IMR-90 (cell line): ENCODE measurements at regions of chr2 and their contacts with region 1.

Region 1: DNA sequence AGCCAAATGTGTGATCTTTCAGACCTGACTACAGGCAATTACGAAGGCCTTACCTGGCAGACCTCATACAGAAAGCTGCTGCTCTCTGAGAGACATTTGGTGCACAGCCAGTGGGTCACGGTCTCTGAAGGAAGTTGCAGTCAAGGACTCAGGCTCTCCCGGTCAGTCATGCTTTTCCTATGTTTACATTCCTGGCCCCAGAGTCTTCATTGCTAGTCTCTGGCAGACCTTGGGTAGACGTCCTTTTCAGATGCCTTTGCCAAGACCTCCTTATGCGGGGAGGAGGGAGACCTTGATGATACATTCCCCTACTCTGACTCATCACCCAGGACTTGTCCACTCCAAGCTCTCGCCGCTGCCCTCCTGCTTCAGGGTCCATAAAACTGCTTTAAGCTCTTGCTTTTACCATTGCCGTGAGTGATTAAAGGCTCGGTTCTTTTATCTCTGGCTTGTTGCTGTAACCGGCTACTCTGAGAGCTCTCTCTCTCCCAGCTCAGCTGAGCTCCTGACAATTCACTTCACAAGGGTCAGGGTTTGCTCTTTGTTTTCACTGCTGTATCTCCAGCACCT is 62.0 kb upstream of the SLC35F5 start:
- DNase-seq: peak; percentile 100
- ATAC-seq: peak; percentile 98
- H3K4me3 ChIP-seq: peak overlapping the region; percentile 1; the same call in 1 of the 2 replicates
- H3K27ac ChIP-seq: peak overlapping the region; percentile 72
- H3K4me1 ChIP-seq: peaks cover 9% of the 10 kb centered on the region
- H3K27me3 ChIP-seq: no peaks in the 10 kb centered on the region
- CTCF ChIP-seq: no peak
- POLR2A ChIP-seq: no peak
- RAD21 ChIP-seq: peak; percentile 44; the same call in 1 of the 2 replicates

Region 2: DNA sequence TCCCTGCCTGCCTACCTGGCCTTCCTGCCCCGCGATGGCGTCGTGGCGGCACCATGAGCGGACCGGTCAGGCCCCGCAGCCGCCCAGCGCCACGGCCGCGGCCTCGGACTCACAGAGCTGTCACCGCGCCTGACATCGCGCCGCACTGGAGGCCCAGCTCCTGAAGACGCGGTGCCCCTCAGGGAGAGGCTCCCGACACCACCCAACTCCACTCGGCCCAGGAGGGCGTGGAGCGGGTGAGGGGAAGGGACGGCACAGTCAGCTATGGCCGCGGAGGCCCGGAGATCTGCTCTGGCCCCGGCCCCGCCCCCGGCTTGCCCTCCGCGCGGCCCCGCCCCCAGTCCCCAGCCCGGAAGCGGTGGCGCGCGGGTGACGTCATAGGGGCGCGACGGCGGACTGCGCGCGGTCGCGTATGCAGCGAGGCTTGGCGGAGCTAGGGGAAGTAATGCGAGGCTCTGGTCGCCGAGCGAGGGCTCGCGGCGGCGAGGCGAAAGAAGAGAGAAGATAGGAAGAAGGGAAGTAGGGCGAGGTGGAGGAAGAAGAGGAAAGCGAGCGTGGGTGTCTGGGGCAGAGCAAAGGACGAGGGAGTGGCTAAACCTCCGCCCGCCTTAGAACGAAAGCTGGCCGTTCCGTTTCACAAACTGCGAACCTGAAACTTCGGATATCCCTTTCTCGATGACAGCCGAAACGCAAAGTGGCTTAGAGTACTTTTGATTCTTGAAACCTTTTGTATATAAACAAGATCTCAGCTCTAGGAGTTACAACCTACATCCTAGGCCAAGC is 61.9 kb before region 1 on chr2 and contains the start of gene SLC35F5:
- CTCF ChIA-PET with region 1: no interaction called
- POLR2A ChIA-PET with region 1: interaction called, 3 read pairs
- dilution Hi-C with region 1: no loop called
- in situ Hi-C with region 1: no loop called
- intact Hi-C with region 1: loop called (anchors 1 kb)
- DNase-seq: peak; percentile 86
- ATAC-seq: peak; percentile 98
- H3K4me3 ChIP-seq: peak within 1 kb of the TSS; percentile 87
- H3K27ac ChIP-seq: peak within 1 kb of the TSS; percentile 99
- H3K4me1 ChIP-seq: 0 out of 2 replicates have a peak, but pooled peaks cover 2% of the 10 kb centered on the region
- H3K27me3 ChIP-seq: no peaks in the 10 kb centered on the region
- CTCF ChIP-seq: no peak
- POLR2A ChIP-seq: peak; percentile 89
- RAD21 ChIP-seq: no peak
- total RNA-seq, gene SLC35F5: 93.4 and 106 TPM in 2 replicates

Region 3: DNA sequence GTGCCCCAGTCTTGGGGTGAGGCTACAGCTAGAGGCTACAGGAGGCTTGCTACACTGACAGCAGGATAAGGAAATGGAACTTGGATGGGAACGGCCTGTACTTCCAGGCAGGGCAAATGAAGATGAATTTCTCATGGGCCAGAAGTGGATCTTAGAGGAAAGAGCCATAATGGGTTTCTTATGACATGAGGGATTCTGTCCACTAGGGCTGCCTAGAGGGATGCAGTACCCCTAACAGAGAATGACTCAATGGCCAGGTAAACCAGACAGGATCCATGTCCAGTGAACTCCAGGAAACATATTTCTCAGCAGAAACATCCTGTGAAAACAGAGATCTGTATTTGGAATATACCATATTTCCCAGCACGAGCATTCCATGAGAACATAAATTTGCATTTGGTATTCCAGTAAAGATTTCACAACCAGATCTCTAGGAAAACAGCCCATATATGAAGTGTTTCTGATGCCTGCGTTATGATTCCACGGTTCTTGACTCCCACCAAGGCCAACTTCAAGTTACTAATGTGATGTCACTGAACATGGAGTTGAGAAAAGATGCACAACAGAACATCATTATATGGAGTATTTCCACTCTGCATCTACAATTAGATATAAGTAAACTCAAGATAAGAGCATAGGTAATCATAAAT is 50.5 kb before region 1 on chr2:
- CTCF ChIA-PET with region 1: no interaction called
- POLR2A ChIA-PET with region 1: no interaction called
- dilution Hi-C with region 1: no loop called
- in situ Hi-C with region 1: no loop called
- intact Hi-C with region 1: no loop called
- DNase-seq: peak; percentile 12
- ATAC-seq: no peak; the same call in 1 of the 2 replicates
- H3K4me3 ChIP-seq: no peak overlapping the region
- H3K27ac ChIP-seq: peak overlapping the region; percentile 9; the same call in 1 of the 2 replicates
- H3K4me1 ChIP-seq: peaks cover 5% of the 10 kb centered on the region
- H3K27me3 ChIP-seq: no peaks in the 10 kb centered on the region
- CTCF ChIP-seq: no peak
- POLR2A ChIP-seq: no peak
- RAD21 ChIP-seq: no peak

Region 4: GRCh38 chr2:115624332-115624731 is 1805.9 kb after region 1 on chr2:
- CTCF ChIA-PET with region 1: no interaction called
- POLR2A ChIA-PET with region 1: no interaction called
- dilution Hi-C with region 1: no loop called
- in situ Hi-C with region 1: no loop called
- intact Hi-C with region 1: no loop called
- DNase-seq: no peak
- ATAC-seq: no peak
- H3K4me3 ChIP-seq: no peak overlapping the region
- H3K27ac ChIP-seq: no peak overlapping the region
- H3K4me1 ChIP-seq: no peaks in the 10 kb centered on the region
- H3K27me3 ChIP-seq: no peaks in the 10 kb centered on the region
- CTCF ChIP-seq: no peak
- POLR2A ChIP-seq: no peak
- RAD21 ChIP-seq: no peak